WTC11 (cell line): ENCODE measurements at regions of chr3 and their contacts with region 1.

Region 1: DNA sequence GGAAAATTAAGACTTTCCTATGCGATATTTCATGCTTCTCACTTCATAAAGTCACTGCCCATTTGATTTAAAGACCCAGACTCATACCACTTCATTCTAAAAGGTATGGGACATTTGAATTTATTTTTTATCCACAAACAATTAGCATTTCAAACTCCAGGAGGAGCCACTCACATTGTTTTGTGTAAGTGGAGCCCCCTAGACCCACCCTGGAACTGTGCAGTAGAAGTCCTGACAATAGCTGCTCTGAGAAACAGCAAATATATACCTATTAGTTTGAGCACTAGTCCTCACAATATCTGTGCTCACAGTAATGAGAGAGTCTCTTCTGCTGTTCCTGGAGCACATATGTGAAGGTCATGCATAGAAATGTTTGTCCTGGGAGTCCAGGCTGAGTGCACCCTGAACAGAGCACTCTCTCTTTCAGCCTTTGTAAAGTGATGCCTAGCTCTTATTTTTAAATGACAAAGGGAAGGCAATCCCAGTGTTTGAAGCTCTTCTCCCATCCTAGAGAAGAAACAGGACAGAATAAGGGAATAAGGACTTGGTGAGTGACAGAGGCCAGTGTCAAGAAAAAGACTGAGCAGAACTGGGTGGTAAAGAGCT is 127.5 kb upstream of the STRIT1 start:
- DNase-seq: no peak
- ATAC-seq: peak; percentile 76
- H3K4me3 Mint-ChIP-seq: no peak overlapping the region
- H3K27ac Mint-ChIP-seq: peak overlapping the region; percentile 16; the same call in 1 of the 2 replicates
- H3K4me1 Mint-ChIP-seq: peaks cover 39% of the 10 kb centered on the region
- H3K27me3 Mint-ChIP-seq: no peaks in the 10 kb centered on the region; the same call in 1 of the 2 replicates
- CTCF ChIP-seq: no peak

Region 2: DNA sequence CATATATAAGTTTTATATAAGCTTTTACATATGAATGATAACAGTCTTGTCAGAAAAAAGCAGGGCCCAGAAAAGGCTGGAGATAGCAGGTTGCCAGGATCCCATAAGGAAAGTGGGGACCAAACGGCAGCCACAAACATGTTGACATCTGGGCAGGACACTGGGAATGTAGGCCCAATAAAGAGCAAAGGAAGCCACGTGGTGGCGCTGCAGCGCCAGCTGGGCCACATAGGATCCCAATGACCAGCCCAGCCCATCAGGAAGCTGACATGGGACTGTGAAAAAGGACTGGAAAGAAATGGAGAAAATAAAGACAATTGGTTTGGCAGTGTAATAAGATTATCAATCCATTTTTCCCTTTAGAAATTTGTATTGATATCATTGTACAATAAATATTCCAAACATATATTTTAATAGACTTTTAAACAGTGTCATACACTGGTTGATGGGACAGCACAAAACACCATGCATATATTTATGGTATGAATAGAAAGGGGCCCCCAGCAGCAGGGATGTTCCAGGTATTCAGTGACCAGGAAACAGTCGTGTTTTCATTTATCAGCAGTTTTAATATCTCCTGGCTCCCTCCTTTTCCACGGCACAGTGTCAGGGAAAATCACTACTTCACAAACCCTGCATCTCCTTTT is 38.5 kb before region 1 on chr3:
- CTCF ChIA-PET with region 1: interaction called, 12 read pairs
- POLR2A ChIA-PET with region 1: no interaction called
- DNase-seq: peak; percentile 89
- ATAC-seq: peak; percentile 97
- H3K4me3 Mint-ChIP-seq: no peak overlapping the region
- H3K27ac Mint-ChIP-seq: no peak overlapping the region
- H3K4me1 Mint-ChIP-seq: peaks cover 24% of the 10 kb centered on the region
- H3K27me3 Mint-ChIP-seq: no peaks in the 10 kb centered on the region
- CTCF ChIP-seq: peak; percentile 56; the same call in 1 of the 2 replicates